Transverse colon (tissue), 4 donors: ENCODE measurements at regions of chr9 and their contacts with region 1.

Region 1: DNA sequence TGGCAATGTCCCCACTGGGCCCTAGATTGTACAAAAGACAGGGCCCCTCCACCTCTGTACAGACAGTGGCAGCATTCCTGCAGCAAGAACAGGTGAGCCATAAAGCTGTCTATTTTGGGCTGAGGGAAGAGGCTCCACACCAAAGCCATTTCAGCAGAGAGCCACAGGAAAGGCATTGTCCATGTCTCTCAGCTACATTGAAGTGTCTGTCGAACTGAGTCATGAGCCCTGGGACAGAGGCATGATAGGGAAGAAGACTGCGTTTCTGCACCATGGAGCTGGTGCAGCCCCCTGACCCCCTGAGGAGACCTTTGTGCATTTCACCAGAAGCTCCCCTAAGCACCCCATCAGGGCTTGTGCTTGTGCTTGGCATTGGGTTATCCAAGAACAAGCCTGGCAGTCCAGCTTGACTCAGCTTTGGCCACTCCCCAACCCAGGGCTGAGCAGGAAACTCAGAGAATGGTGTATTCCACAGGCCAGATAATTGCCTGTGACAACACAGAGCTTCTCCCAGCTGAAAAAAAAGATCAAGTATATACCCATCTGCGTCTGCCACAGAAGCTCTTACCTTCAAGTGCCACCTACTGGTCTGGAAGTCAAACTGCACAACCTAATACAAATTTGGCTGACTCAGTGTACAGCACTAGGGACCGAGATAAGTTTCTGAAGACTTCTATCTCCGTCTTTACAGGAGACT is 5.9 kb upstream of the FRMD3 start:
- DNase-seq: peak; percentile 46
- H3K4me3 ChIP-seq: no peak overlapping the region
- H3K27ac ChIP-seq: no peak overlapping the region
- H3K4me1 ChIP-seq: peaks cover 0 to under 1% (median 0%) of the 10 kb centered on the region in 4 donors
- H3K27me3 ChIP-seq: peaks cover 4% of the 10 kb centered on the region
- CTCF ChIP-seq: peak; percentile 54 to 82 (median 71)
- EP300 ChIP-seq: no peak
- POLR2A ChIP-seq: no peak

Region 2: GRCh38 chr9:83204047-83204446 is 340.1 kb before region 1 on chr9:
- in situ Hi-C with region 1: loop called in 1 of 4 experiments (anchors 10 kb)
- intact Hi-C with region 1: no loop called
- DNase-seq: no peak
- H3K4me3 ChIP-seq: no peak overlapping the region
- H3K27ac ChIP-seq: no peak overlapping the region
- H3K4me1 ChIP-seq: no peaks in the 10 kb centered on the region
- H3K27me3 ChIP-seq: no peaks in the 10 kb centered on the region
- CTCF ChIP-seq: no peak
- EP300 ChIP-seq: no peak
- POLR2A ChIP-seq: no peak

Region 3: GRCh38 chr9:83334320-83334719 is 209.8 kb before region 1 on chr9:
- in situ Hi-C with region 1: loop called (anchors 10 to 25 kb)
- intact Hi-C with region 1: loop called (anchors 10 kb)
- DNase-seq: peak; percentile 87
- H3K4me3 ChIP-seq: no peak overlapping the region
- H3K27ac ChIP-seq: no peak overlapping the region
- H3K4me1 ChIP-seq: no peaks in the 10 kb centered on the region
- H3K27me3 ChIP-seq: no peaks in the 10 kb centered on the region
- CTCF ChIP-seq: peak; percentile 82 to 94 (median 90)
- EP300 ChIP-seq: no peak
- POLR2A ChIP-seq: no peak

Region 4: DNA sequence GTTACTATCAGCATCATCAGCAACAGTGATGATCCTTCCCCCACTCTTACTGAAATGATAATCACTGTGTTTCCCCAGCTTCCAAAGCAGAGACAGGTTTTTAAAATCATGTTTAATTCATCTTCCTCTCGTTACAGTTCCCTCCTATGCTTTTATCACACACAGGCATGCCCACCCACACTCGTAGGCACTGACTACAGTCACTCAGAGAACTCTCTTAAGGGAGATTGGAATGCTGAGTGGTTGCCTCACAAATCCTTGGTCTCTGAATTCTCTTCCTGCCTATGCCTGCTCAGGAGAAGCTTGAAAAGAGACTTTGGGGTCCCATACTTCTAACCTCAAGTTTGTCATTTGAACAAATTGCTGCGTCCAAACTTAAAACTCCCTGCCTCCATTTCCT is 185.1 kb before region 1 on chr9:
- in situ Hi-C with region 1: no loop called
- intact Hi-C with region 1: no loop called
- DNase-seq: no peak
- H3K4me3 ChIP-seq: no peak overlapping the region
- H3K27ac ChIP-seq: no peak overlapping the region
- H3K4me1 ChIP-seq: no peaks in the 10 kb centered on the region
- H3K27me3 ChIP-seq: no peaks in the 10 kb centered on the region
- CTCF ChIP-seq: no peak
- EP300 ChIP-seq: no peak
- POLR2A ChIP-seq: no peak

Region 5: DNA sequence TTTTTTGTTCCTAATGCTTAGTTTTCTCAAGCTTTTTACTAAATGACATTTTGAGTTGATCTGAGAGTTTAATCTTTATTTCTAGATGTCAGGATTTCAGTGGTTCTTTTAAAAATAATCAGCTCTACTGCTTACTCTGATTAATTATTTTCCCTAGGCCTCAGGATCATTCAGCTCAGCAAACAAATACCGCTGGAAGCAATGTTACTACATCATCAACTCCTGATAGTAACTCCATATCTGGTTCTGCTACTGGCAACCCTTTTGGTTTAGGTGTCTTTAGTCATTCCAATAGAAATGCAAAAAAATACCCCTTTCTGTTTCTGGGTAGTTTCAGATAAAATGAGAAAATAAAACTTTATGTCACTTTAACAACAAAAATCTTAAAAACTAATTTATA is 73.1 kb after region 1 on chr9:
- in situ Hi-C with region 1: no loop called
- intact Hi-C with region 1: no loop called
- DNase-seq: no peak
- H3K4me3 ChIP-seq: no peak overlapping the region
- H3K27ac ChIP-seq: no peak overlapping the region
- H3K4me1 ChIP-seq: peaks cover 0 to 11% (median 7%) of the 10 kb centered on the region in 4 donors
- H3K27me3 ChIP-seq: no peaks in the 10 kb centered on the region
- CTCF ChIP-seq: no peak
- EP300 ChIP-seq: no peak
- POLR2A ChIP-seq: no peak